Activated naive CD4-positive, alpha-beta T cell treated with anti-CD3 and anti-CD28 coated beads, Interleukin-2, amount 10 ng/mL, durations not matched to agents 7 days and 5 days (primary cell): ENCODE measurements at regions of chr15 and their contacts with region 1.

Region 1: GRCh38 chr15:59917504-59918157 is 86.5 kb upstream of the FOXB1 start:
- DNase-seq: peak; percentile 82
- H3K4me3 Mint-ChIP-seq: no peak overlapping the region
- H3K27ac Mint-ChIP-seq: no peak overlapping the region
- H3K4me1 Mint-ChIP-seq: peaks cover 34% of the 10 kb centered on the region
- H3K27me3 Mint-ChIP-seq: peaks cover 21% of the 10 kb centered on the region

Region 2: GRCh38 chr15:59668556-59668955 is 249.1 kb before region 1 on chr15:
- CTCF ChIA-PET with region 1: no interaction called
- DNase-seq: no peak
- H3K4me3 Mint-ChIP-seq: no peak overlapping the region
- H3K27ac Mint-ChIP-seq: no peak overlapping the region
- H3K4me1 Mint-ChIP-seq: no peaks in the 10 kb centered on the region
- H3K27me3 Mint-ChIP-seq: no peaks in the 10 kb centered on the region

Region 3: GRCh38 chr15:59725172-59725486 is 192.5 kb before region 1 on chr15:
- CTCF ChIA-PET with region 1: interaction called, 19 read pairs
- DNase-seq: no peak
- H3K4me3 Mint-ChIP-seq: no peak overlapping the region
- H3K27ac Mint-ChIP-seq: no peak overlapping the region
- H3K4me1 Mint-ChIP-seq: no peaks in the 10 kb centered on the region
- H3K27me3 Mint-ChIP-seq: peaks cover 4% of the 10 kb centered on the region

Region 4: GRCh38 chr15:59838900-59839299 is 78.7 kb before region 1 on chr15:
- CTCF ChIA-PET with region 1: no interaction called
- DNase-seq: no peak
- H3K4me3 Mint-ChIP-seq: peak overlapping the region; percentile 26
- H3K27ac Mint-ChIP-seq: peak overlapping the region; percentile 83
- H3K4me1 Mint-ChIP-seq: peaks cover 63% of the 10 kb centered on the region
- H3K27me3 Mint-ChIP-seq: peaks cover 15% of the 10 kb centered on the region

Region 5: GRCh38 chr15:59997070-59997701 is 79.6 kb after region 1 on chr15:
- CTCF ChIA-PET with region 1: interaction called, 30 read pairs
- DNase-seq: peak; percentile 85
- H3K4me3 Mint-ChIP-seq: peak overlapping the region; percentile 77
- H3K27ac Mint-ChIP-seq: peak overlapping the region; percentile 65
- H3K4me1 Mint-ChIP-seq: peaks cover 76% of the 10 kb centered on the region
- H3K27me3 Mint-ChIP-seq: peaks cover 100% of the 10 kb centered on the region

Region 6: DNA sequence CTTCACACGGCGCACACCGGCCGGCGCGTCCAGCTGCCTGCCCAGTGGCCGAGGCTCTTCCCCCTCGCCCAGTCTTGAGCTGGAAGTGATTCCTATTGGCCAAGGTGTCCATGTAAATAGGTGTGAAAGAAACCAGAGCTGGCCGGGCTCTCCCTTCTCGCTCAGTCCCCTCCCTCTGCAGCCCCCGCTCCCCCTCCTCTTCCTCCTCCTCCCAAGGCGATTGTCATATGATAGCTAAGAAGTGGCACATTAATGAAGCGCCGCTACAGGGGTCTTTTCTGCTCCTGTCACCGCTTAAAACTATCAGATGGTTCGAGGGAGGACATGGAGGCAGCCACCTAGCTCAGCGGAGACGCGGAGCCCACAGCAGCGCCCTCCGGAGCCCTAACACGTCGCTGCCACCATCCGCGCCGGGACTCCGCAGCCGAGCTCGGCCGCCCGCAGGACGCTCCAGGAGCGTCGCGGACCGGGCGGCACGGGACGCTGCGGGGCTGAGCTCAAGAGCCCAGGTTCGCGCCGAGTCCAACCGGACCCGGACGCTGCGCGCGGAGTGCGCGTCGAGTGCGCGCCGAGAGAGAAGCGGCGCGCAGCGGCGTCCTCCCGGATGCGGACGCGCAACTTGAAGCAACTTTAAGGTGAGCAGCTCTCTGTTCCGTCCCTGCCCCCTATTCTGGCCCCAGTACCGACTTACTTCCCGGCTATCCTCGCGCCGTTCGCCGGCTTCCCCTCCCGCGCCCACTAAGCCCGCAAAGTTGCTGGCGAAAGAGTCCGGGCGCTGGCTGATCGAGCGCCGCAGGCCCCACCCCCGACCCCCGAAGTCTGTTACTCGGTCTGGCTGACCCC is 86.6 kb after region 1 on chr15 and contains the start of gene FOXB1:
- CTCF ChIA-PET with region 1: interaction called, 26 read pairs
- DNase-seq: peak; percentile 55
- H3K4me3 Mint-ChIP-seq: peak within 1 kb of the TSS; percentile 94
- H3K27ac Mint-ChIP-seq: peak within 1 kb of the TSS; percentile 94
- H3K4me1 Mint-ChIP-seq: peaks cover 76% of the 10 kb centered on the region
- H3K27me3 Mint-ChIP-seq: peaks cover 94% of the 10 kb centered on the region

Region 7: GRCh38 chr15:60179786-60180391 is 262.3 kb after region 1 on chr15:
- CTCF ChIA-PET with region 1: interaction called, 41 read pairs
- DNase-seq: peak; percentile 54
- H3K4me3 Mint-ChIP-seq: no peak overlapping the region
- H3K27ac Mint-ChIP-seq: no peak overlapping the region
- H3K4me1 Mint-ChIP-seq: no peaks in the 10 kb centered on the region
- H3K27me3 Mint-ChIP-seq: peaks cover 29% of the 10 kb centered on the region